ENCODE measurements at regions of chr19 and their contacts with region 1.

Region 1: DNA sequence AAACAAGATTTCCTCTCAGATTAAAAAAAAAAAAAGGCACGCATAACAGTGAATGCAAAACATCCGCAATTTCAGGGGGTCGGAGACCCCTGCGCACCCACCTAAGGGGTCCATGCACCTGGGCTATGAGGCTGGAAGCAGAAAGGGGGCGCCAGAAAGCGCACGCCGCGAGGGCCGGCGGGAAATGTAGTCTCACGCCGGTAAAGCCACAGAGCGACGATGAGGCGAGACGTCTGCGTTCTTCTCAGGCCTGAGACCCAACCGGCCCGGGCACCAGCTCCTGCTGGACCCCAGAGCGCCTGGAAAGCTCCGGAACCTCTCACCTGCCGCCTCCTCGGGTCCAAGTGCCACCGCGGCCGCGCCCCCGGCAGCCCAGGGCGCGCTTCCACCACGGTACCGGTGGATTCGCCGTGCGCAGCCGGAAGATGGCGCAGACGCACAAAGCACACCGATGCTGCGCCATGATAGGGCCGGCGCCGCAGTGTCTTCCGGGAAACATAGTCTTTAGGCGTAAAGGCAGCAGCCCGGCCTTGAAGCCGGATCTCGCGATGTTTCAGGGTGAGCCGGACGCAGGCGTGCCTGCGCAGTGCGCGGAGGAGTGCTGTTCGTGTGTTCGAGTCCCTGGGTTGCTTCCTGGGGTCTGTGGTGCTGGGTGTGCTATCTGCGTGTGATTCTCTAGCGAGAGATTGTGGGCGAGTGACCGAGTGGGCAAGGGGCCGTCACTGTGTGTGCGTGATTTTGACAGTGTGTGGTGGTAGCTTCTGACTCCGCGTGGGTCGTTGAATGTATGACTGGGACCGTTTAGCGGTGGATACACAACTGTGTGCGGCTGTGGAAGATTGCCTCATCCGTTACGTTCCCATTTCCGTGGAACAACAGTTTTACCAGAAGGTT is at the start of gene ZNF582:
- DNase-seq: peak; percentile 96
- ATAC-seq: peak; percentile 95
- H3K4me3 ChIP-seq: peak within 1 kb of the TSS; percentile 75 to 96 (median 82)
- H3K4me3 Mint-ChIP-seq: peak within 1 kb of the TSS; percentile 100
- H3K27ac ChIP-seq: peak within 1 kb of the TSS; percentile 93 to 98
- H3K27ac Mint-ChIP-seq: peak within 1 kb of the TSS; percentile 99
- H3K4me1 ChIP-seq: peaks cover 4 to 8% of the 10 kb centered on the region in 2 donors
- H3K4me1 Mint-ChIP-seq: peaks cover 17% of the 10 kb centered on the region
- H3K27me3 ChIP-seq: no peaks in the 10 kb centered on the region
- H3K27me3 Mint-ChIP-seq: no peaks in the 10 kb centered on the region
- CTCF ChIP-seq: peak; percentile 88
- total RNA-seq, gene ZNF582: 10.0 and 10.1 TPM in 2 replicates

Region 2: DNA sequence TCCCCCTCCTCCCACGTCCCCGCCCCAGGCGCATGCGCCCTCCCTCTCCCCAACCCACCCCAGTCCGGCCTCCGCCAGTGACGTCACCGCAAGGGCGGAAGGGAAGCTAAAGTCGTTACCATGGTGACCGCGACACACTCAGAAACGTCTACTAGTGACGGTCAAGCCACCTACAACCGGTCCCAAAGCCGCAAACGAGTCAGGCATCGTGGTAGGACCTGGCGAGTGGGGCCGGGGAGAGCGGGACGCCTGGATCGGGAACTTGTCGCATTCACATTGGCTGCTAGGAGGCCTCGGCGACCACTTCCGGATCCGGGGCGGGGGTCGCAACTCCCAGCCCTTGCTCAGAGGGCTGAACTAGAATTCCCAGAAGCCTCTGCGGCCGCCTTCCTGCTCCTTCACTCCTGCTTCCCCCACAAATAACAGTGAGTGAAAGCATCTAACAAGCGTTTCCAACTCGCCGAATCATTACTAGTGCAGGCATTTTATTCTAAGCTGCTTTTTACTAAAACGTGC is 78.7 kb before region 1 on chr19 and contains the start of gene ZSCAN5A:
- CTCF ChIA-PET with region 1: no interaction called
- POLR2A ChIA-PET with region 1: no interaction called
- intact Hi-C with region 1: loop called (anchors 1 kb)
- DNase-seq: peak; percentile 99
- ATAC-seq: peak; percentile 77
- H3K4me3 ChIP-seq: peak within 1 kb of the TSS; percentile 67 to 84 (median 80)
- H3K4me3 Mint-ChIP-seq: peak within 1 kb of the TSS; percentile 95
- H3K27ac ChIP-seq: peak within 1 kb of the TSS; percentile 95 to 99
- H3K27ac Mint-ChIP-seq: peak within 1 kb of the TSS; percentile 94
- H3K4me1 ChIP-seq: peaks cover 12 to 13% of the 10 kb centered on the region in 2 donors
- H3K4me1 Mint-ChIP-seq: peaks cover 17% of the 10 kb centered on the region
- H3K27me3 ChIP-seq: no peaks in the 10 kb centered on the region
- H3K27me3 Mint-ChIP-seq: no peaks in the 10 kb centered on the region
- CTCF ChIP-seq: no peak
- total RNA-seq, gene ZSCAN5A: 20.5 and 24.8 TPM in 2 replicates

Region 3: DNA sequence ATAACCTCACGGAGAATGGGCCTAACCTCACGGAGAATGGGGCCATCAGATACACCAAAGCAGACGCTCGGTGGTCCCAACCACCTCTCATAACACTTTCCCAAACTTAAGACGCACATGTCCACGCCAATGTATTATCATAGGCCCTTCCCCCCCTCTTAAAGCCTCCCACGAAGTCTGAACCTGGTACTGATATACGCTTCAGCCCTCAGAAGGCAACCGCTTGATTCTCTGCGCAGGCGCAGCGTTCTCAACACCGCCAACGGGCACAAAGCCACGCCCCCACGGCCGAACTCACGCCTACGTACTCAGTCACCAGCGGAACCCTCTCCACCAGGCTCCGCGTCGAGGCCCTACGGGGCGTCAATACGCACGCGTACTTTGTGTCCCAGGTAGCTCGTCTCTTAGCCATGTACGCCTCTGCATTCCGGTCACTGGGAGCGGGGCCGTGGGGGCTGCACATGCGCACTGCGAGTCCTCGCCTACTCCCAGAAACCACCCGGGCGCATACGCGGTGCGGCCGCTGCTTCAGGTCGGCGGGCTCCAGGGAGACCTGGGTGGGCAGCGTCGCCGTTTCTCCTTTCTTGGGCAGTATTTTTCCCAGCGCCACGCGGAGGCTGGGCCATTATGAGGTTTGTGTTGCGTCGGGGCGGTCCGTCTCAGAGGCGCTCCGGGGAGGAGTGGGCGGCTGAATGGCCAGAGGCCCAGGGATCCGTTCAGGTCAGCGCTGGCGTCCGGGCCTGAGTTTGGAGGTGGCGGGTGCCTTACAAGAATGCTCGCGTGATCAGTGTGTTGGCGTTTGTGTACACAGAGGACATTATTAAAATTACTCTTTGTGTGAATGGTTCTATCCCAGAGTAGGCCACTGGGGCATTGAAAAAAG is 25.3 kb before region 1 on chr19:
- CTCF ChIA-PET with region 1: no interaction called
- POLR2A ChIA-PET with region 1: no interaction called
- intact Hi-C with region 1: loop called (anchors 1 kb)
- DNase-seq: peak; percentile 93
- ATAC-seq: peak; percentile 99
- H3K4me3 ChIP-seq: peak overlapping the region; percentile 45 to 85 (median 77)
- H3K4me3 Mint-ChIP-seq: peak overlapping the region; percentile 96
- H3K27ac ChIP-seq: peak overlapping the region; percentile 78 to 79
- H3K27ac Mint-ChIP-seq: peak overlapping the region; percentile 90
- H3K4me1 ChIP-seq: peaks cover 8 to 14% of the 10 kb centered on the region in 2 donors
- H3K4me1 Mint-ChIP-seq: peaks cover 25% of the 10 kb centered on the region
- H3K27me3 ChIP-seq: no peaks in the 10 kb centered on the region
- H3K27me3 Mint-ChIP-seq: no peaks in the 10 kb centered on the region
- CTCF ChIP-seq: no peak

Region 4: GRCh38 chr19:56477429-56478338 is 84.3 kb after region 1 on chr19:
- CTCF ChIA-PET with region 1: no interaction called
- POLR2A ChIA-PET with region 1: no interaction called
- intact Hi-C with region 1: loop called (anchors 2 kb)
- DNase-seq: peak; percentile 93
- ATAC-seq: peak; percentile 80
- H3K4me3 ChIP-seq: peak overlapping the region; percentile 69 to 76 (median 70)
- H3K4me3 Mint-ChIP-seq: peak overlapping the region; percentile 99
- H3K27ac ChIP-seq: peak overlapping the region; percentile 87 to 94
- H3K27ac Mint-ChIP-seq: peak overlapping the region; percentile 94
- H3K4me1 ChIP-seq: peaks cover 11 to 20% of the 10 kb centered on the region in 2 donors
- H3K4me1 Mint-ChIP-seq: peaks cover 18% of the 10 kb centered on the region
- H3K27me3 ChIP-seq: no peaks in the 10 kb centered on the region
- H3K27me3 Mint-ChIP-seq: peaks cover 19% of the 10 kb centered on the region
- CTCF ChIP-seq: no peak

Region 5: GRCh38 chr19:56594783-56595547 is 201.6 kb after region 1 on chr19 and contains the start of gene ZNF71:
- CTCF ChIA-PET with region 1: no interaction called
- POLR2A ChIA-PET with region 1: interaction called, 19 read pairs
- intact Hi-C with region 1: no loop called
- DNase-seq: peak; percentile 89
- ATAC-seq: peak; percentile 94
- H3K4me3 ChIP-seq: peak within 1 kb of the TSS; percentile 22 to 88 (median 68)
- H3K4me3 Mint-ChIP-seq: peak within 1 kb of the TSS; percentile 93
- H3K27ac ChIP-seq: peak within 1 kb of the TSS; percentile 49 to 88
- H3K27ac Mint-ChIP-seq: peak within 1 kb of the TSS; percentile 90
- H3K4me1 ChIP-seq: peaks cover 11 to 20% of the 10 kb centered on the region in 2 donors
- H3K4me1 Mint-ChIP-seq: peaks cover 19% of the 10 kb centered on the region
- H3K27me3 ChIP-seq: peaks cover 0 to 4% (median 0%) of the 10 kb centered on the region in 4 experiments
- H3K27me3 Mint-ChIP-seq: no peaks in the 10 kb centered on the region
- CTCF ChIP-seq: no peak
- total RNA-seq, gene ZNF71: 9.0 and 9.3 TPM in 2 replicates

Region 6: GRCh38 chr19:56619121-56619520 is 225.8 kb after region 1 on chr19:
- CTCF ChIA-PET with region 1: no interaction called
- POLR2A ChIA-PET with region 1: no interaction called
- intact Hi-C with region 1: no loop called
- DNase-seq: no peak
- ATAC-seq: no peak
- H3K4me3 ChIP-seq: no peak overlapping the region
- H3K4me3 Mint-ChIP-seq: no peak overlapping the region
- H3K27ac ChIP-seq: no peak overlapping the region
- H3K27ac Mint-ChIP-seq: no peak overlapping the region
- H3K4me1 ChIP-seq: no peaks in the 10 kb centered on the region
- H3K4me1 Mint-ChIP-seq: no peaks in the 10 kb centered on the region
- H3K27me3 ChIP-seq: no peaks in the 10 kb centered on the region
- H3K27me3 Mint-ChIP-seq: no peaks in the 10 kb centered on the region
- CTCF ChIP-seq: no peak

Region 7: GRCh38 chr19:56671613-56671994 is 278.2 kb after region 1 on chr19 and contains the start of gene ZNF835:
- CTCF ChIA-PET with region 1: no interaction called
- POLR2A ChIA-PET with region 1: no interaction called
- intact Hi-C with region 1: loop called (anchors 1 kb)
- DNase-seq: peak; percentile 92
- ATAC-seq: peak; percentile 98
- H3K4me3 ChIP-seq: peak within 1 kb of the TSS; percentile 27 to 83 (median 72)
- H3K4me3 Mint-ChIP-seq: peak within 1 kb of the TSS; percentile 98
- H3K27ac ChIP-seq: no peak within 1 kb of the TSS
- H3K27ac Mint-ChIP-seq: peak within 1 kb of the TSS; percentile 89
- H3K4me1 ChIP-seq: peaks cover 9 to 18% of the 10 kb centered on the region in 2 donors
- H3K4me1 Mint-ChIP-seq: peaks cover 14% of the 10 kb centered on the region
- H3K27me3 ChIP-seq: no peaks in the 10 kb centered on the region
- H3K27me3 Mint-ChIP-seq: no peaks in the 10 kb centered on the region
- CTCF ChIP-seq: peak; percentile 33
- total RNA-seq, gene ZNF835: 7.0 and 10.1 TPM in 2 replicates